A549 (cell line): ENCODE measurements at regions of chr9 and their contacts with region 1.

Region 1: GRCh38 chr9:26975693-26976059 is 19.5 kb downstream of the IFT74 start:
- DNase-seq: peak; percentile 40 to 72
- ATAC-seq: peak; percentile 95 to 97
- H3K4me3 ChIP-seq: peak overlapping the region; percentile 38
- H3K27ac ChIP-seq: peak overlapping the region; percentile 59 to 78
- H3K4me1 ChIP-seq: peaks cover 10% of the 10 kb centered on the region; the same call in 2 of the 3 replicates
- CTCF ChIP-seq: peak; percentile 75
- EP300 ChIP-seq: no peak
- POLR2A ChIP-seq: peak; percentile 23; the same call in 1 of the 2 replicates
- RAD21 ChIP-seq: peak; percentile 78 to 89

Region 2: DNA sequence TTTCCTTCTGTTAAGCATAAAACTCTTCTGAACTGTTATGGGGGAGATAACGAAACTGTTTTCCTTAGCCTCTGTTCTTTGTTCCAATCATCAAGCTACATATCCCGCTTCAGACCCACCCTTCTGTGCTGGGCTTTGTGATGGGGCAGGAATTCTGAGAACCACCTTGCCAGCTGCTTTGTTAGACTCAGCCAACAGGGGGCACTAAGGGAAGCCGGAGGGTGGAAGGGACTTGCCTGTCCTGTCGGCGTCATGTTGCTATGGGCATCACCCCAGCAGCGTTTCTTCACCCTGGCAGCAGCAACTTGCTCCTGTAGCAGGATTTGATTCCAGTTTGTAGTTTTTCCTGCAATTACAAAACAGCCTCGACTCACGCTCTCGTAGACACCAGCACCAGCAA is 252.2 kb before region 1 on chr9:
- CTCF ChIA-PET with region 1: interaction called, 12 read pairs
- POLR2A ChIA-PET with region 1: no interaction called
- DNase-seq: peak; percentile 44 to 70
- ATAC-seq: peak; percentile 96 to 99
- H3K4me3 ChIP-seq: no peak overlapping the region
- H3K27ac ChIP-seq: no peak overlapping the region
- H3K4me1 ChIP-seq: no peaks in the 10 kb centered on the region
- CTCF ChIP-seq: peak; percentile 51
- EP300 ChIP-seq: no peak
- POLR2A ChIP-seq: no peak
- RAD21 ChIP-seq: peak; percentile 32 to 47; a peak in 2 of 5 replicates

Region 3: GRCh38 chr9:26892251-26893029 is 83.2 kb before region 1 on chr9 and contains the start of gene CAAP1:
- CTCF ChIA-PET with region 1: interaction called, 24 read pairs
- POLR2A ChIA-PET with region 1: interaction called, 5 read pairs
- DNase-seq: peak; percentile 88 to 95
- ATAC-seq: peak; percentile 96
- H3K4me3 ChIP-seq: peak within 1 kb of the TSS; percentile 78
- H3K27ac ChIP-seq: peak within 1 kb of the TSS; percentile 96
- H3K4me1 ChIP-seq: peaks cover 12% of the 10 kb centered on the region
- CTCF ChIP-seq: peak; percentile 33; the same call in 1 of the 3 replicates
- EP300 ChIP-seq: no peak
- POLR2A ChIP-seq: peak; percentile 93
- RAD21 ChIP-seq: peak; percentile 17 to 38; a peak in 4 of 5 replicates
- polyA plus RNA-seq, gene CAAP1: 22.4 and 32.8 TPM in 2 replicates

Region 4: DNA sequence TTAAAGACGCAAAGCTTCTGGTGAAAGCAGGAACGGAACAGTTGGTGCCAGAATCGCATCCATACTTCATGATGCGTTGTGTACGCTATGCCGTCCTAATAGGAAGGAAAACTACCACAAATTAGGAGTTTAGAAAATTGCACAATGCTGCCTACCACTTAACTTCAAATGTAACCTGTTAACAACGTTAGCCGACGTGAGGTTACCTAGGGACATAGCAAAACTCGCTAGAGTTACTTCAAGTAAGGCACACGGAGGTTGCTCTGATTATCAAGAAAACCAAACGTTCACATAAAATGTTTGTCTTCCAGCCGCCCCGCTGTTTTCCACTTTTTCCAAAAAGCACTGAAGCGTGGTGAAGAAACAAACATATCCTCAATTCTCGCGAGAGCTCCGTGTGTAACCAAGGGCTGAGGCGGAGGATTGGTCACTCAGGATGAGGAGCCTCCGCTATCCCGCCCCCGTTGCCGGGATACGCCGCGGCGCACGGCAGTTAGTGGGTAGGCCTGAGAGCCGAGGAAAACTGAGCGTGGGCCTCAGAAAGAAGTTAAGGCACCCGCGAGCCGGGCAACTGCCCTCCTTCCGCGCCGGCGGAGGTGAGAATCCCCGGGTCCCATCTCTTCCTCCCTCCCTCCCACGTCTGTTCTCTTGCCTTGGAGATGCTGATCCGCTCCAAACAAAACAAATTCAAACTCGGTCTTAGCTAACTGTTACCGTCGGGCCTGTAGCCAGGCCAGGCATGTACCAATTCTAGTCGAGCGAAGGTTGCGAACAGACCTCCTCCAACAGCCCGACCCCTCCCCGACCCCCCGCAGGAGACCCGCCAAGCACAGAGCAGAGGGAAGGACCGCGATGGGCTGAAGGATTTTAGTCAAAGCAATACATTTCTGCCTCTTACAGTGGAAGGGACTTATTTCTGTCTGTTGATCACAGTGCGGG is 19.5 kb before region 1 on chr9 and contains the start of gene IFT74:
- CTCF ChIA-PET with region 1: interaction called, 23 read pairs
- POLR2A ChIA-PET with region 1: interaction called, 13 read pairs
- DNase-seq: peak; percentile 98 to 99
- ATAC-seq: peak; percentile 100
- H3K4me3 ChIP-seq: peak within 1 kb of the TSS; percentile 74
- H3K27ac ChIP-seq: peak within 1 kb of the TSS; percentile 90 to 93
- H3K4me1 ChIP-seq: peaks cover 14% of the 10 kb centered on the region; the same call in 2 of the 3 replicates
- CTCF ChIP-seq: no peak
- EP300 ChIP-seq: no peak
- POLR2A ChIP-seq: peak; percentile 76
- RAD21 ChIP-seq: no peak
- polyA plus RNA-seq, gene IFT74: 17.3 and 26.3 TPM in 2 replicates

Region 5: DNA sequence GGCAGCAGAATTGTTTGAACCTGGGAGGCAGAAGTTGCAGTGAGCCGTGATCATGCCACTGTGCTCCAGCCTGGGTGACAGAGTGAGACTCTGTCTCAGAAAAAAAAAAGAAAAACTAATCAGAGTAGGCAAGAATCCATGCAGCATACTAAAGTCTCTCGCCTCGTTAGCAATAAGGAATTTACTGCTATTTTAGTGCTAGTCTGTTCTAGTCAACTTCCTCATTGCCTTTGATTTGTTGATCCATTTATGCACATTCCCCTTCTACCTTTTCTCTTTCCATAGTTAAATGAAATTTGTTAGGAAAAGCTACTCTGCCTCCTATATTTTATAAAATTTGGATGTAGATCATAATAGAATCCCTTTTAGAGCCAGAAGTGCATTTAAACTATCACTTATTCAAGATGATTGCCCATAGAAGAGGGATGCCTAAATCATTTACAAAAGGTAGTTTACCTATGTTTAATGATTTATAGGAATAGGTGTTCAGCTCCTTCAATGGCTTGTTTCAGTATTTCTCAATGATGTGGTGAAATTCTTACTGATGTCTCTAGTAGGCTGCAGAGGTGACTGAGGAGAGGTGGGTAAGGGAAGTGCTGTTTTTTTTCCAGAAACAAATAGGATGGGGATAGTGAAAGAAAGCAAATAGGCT is 27.9 kb after region 1 on chr9:
- CTCF ChIA-PET with region 1: no interaction called
- POLR2A ChIA-PET with region 1: no interaction called
- DNase-seq: no peak
- ATAC-seq: no peak
- H3K4me3 ChIP-seq: no peak overlapping the region
- H3K27ac ChIP-seq: no peak overlapping the region
- H3K4me1 ChIP-seq: no peaks in the 10 kb centered on the region
- CTCF ChIP-seq: no peak
- EP300 ChIP-seq: no peak
- POLR2A ChIP-seq: no peak
- RAD21 ChIP-seq: no peak

Region 6: GRCh38 chr9:27125030-27125429 is 149.4 kb after region 1 on chr9:
- CTCF ChIA-PET with region 1: no interaction called
- POLR2A ChIA-PET with region 1: no interaction called
- DNase-seq: peak; percentile 30 to 70
- ATAC-seq: peak; percentile 97
- H3K4me3 ChIP-seq: no peak overlapping the region
- H3K27ac ChIP-seq: peak overlapping the region; percentile 25 to 55; a peak in 5 of 6 replicates
- H3K4me1 ChIP-seq: peaks cover 21% of the 10 kb centered on the region
- CTCF ChIP-seq: no peak
- EP300 ChIP-seq: no peak
- POLR2A ChIP-seq: no peak
- RAD21 ChIP-seq: no peak